GM12878 (cell line): ENCODE measurements at regions of chr1 and their contacts with region 1.

Region 1: DNA sequence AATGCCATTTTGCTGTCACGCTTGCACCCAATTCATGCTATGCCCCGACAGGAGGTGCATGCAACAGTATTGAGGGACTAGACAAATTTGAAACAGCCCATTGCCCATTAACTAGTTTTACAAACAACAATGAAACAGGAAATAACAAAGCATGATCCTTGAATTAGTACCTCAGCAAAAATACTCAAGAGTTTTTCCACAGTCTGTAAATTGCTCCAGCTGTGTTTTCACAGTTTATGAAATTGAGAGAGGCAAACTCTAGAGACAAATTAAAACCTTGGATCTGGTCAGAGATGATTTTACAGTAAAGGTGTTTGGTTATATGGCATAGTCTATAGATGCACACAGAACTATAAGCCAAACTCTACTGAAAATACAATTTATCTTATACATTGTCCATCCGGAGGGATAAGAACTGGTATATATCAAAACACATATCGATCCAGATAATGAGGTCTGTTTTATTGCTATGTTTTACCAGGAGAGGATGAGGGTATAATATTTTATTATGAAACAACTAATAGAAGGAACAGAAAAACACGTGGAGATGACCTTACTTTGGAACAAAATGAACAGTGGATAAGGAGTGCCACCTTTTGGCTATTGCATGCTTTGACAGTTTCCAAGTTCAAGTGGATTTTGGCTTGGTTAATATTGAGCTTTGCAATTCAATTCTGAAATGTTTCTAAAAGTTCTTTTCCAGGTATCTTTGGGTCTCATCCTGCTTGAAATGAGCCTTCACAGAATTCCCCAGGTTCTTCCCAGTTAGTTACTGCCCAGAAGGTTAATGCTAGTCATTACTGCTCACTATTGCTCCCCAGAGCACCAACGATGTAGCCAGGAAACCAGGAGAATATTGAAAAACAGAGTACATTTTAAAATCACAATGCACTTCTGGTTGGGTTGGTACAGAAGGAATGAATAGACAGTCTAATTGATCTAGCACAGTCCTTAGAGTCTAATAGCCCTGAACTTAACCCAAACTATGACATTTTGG is 45.7 kb downstream of the ZC3H11B start:
- DNase-seq: peak; percentile 13
- ATAC-seq: peak; percentile 70
- H3K4me3 ChIP-seq: no peak overlapping the region
- H3K27ac ChIP-seq: no peak overlapping the region
- H3K4me1 ChIP-seq: no peaks in the 10 kb centered on the region; the same call in 1 of the 2 replicates
- H3K27me3 ChIP-seq: no peaks in the 10 kb centered on the region; a peak in 1 of 4 replicates
- CTCF ChIP-seq: peak; percentile 48 to 74 (median 53)
- EP300 ChIP-seq: no peak
- POLR2A ChIP-seq: no peak
- RAD21 ChIP-seq: peak; percentile 86

Region 2: DNA sequence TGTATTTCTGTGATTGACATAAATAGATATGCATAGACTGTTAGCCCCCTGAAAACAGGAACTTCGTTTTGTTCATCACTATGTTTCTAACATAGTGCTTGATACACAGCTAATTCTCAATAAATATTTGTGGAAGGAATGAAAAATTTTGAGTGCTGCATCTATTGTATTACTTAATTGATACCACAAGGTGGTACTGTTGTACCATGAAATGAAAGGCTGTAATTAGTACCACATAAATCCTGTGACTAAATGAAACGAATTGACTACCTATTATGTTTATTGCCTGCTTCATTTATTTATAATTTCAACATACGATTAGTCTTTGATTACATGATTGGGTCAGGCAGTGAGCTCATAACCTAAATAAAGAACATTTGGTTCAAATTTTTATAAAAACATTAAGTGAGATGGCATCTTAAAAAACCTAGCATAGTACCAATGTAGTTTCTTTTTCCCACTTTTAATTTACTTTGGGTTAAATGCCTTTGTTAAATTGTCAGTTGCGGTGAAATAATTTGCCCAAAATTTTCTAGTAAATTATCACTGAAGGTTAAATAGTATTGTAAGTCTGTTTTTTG is 1237.1 kb before region 1 on chr1:
- CTCF ChIA-PET with region 1: no interaction called
- POLR2A ChIA-PET with region 1: no interaction called
- RAD21 ChIA-PET with region 1: no interaction called
- SMC1A ChIA-PET with region 1: interaction called, 3 read pairs
- in situ Hi-C with region 1: no loop called
- intact Hi-C with region 1: loop called (anchors 5 kb)
- DNase-seq: no peak
- ATAC-seq: peak; percentile 76
- H3K4me3 ChIP-seq: no peak overlapping the region
- H3K27ac ChIP-seq: no peak overlapping the region
- H3K4me1 ChIP-seq: no peaks in the 10 kb centered on the region
- H3K27me3 ChIP-seq: no peaks in the 10 kb centered on the region
- CTCF ChIP-seq: peak; percentile 36 to 69 (median 39); a peak in 5 of 6 replicates
- EP300 ChIP-seq: no peak
- POLR2A ChIP-seq: no peak
- RAD21 ChIP-seq: peak; percentile 71

Region 3: DNA sequence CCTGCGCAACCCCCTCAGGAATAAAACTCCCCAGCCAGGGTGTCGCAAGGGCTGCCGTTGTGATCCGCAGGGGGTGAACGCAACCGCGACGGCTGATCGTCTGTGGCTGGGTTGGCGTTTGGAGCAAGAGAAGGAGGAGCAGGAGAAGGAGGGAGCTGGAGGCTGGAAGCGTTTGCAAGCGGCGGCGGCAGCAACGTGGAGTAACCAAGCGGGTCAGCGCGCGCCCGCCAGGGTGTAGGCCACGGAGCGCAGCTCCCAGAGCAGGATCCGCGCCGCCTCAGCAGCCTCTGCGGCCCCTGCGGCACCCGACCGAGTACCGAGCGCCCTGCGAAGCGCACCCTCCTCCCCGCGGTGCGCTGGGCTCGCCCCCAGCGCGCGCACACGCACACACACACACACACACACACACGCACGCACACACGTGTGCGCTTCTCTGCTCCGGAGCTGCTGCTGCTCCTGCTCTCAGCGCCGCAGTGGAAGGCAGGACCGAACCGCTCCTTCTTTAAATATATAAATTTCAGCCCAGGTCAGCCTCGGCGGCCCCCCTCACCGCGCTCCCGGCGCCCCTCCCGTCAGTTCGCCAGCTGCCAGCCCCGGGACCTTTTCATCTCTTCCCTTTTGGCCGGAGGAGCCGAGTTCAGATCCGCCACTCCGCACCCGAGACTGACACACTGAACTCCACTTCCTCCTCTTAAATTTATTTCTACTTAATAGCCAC is 1221.4 kb before region 1 on chr1:
- CTCF ChIA-PET with region 1: no interaction called
- POLR2A ChIA-PET with region 1: no interaction called
- RAD21 ChIA-PET with region 1: no interaction called
- SMC1A ChIA-PET with region 1: no interaction called
- in situ Hi-C with region 1: loop called (anchors 10 kb)
- intact Hi-C with region 1: loop called (anchors 5 kb)
- DNase-seq: no peak
- ATAC-seq: peak; percentile 90
- H3K4me3 ChIP-seq: peak overlapping the region; percentile 67
- H3K27ac ChIP-seq: no peak overlapping the region
- H3K4me1 ChIP-seq: peaks cover 4% of the 10 kb centered on the region
- H3K27me3 ChIP-seq: peaks cover 3 to 21% of the 10 kb centered on the region in 2 experiments
- CTCF ChIP-seq: no peak
- EP300 ChIP-seq: no peak
- POLR2A ChIP-seq: no peak
- RAD21 ChIP-seq: no peak

Region 4: GRCh38 chr1:219209578-219209977 is 357.7 kb before region 1 on chr1:
- CTCF ChIA-PET with region 1: no interaction called
- POLR2A ChIA-PET with region 1: no interaction called
- RAD21 ChIA-PET with region 1: no interaction called
- SMC1A ChIA-PET with region 1: no interaction called
- in situ Hi-C with region 1: no loop called
- intact Hi-C with region 1: loop called (anchors 2 kb)
- DNase-seq: no peak
- ATAC-seq: no peak
- H3K4me3 ChIP-seq: no peak overlapping the region
- H3K27ac ChIP-seq: no peak overlapping the region
- H3K4me1 ChIP-seq: no peaks in the 10 kb centered on the region
- H3K27me3 ChIP-seq: no peaks in the 10 kb centered on the region
- CTCF ChIP-seq: no peak
- EP300 ChIP-seq: no peak
- POLR2A ChIP-seq: no peak
- RAD21 ChIP-seq: no peak

Region 5: DNA sequence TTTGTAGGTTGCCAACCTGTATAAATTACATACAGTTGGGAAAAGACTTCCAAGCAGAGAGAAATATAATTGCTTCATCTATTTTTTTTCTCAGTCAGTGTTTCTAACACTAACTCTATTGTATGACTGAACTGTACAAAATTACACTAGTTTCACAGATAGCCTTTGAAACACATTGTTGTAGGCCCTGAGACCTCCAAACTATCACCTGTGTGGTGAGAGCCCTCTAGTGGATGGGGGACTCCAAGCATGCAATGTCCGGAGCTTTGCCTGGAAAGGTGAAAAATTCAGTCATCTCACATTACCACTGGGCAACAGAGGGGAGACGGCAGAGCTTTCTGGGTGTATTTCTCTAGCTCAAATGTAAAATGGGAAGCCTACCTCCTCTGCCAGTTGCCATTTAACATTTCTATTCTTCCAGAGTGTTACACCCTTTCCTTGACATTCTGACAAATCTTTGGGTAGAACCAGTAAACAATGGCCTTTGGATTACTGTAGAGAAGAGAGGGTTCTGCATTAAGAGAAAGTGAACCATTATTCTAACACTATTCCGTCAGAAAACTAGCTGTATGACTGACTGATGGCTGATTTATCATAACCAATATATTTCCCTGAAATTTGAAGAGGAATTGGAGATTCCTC is 181.3 kb before region 1 on chr1:
- CTCF ChIA-PET with region 1: no interaction called
- POLR2A ChIA-PET with region 1: no interaction called
- RAD21 ChIA-PET with region 1: no interaction called
- SMC1A ChIA-PET with region 1: no interaction called
- in situ Hi-C with region 1: no loop called
- intact Hi-C with region 1: loop called (anchors 1 kb)
- DNase-seq: peak; percentile 5
- ATAC-seq: peak; percentile 99
- H3K4me3 ChIP-seq: no peak overlapping the region
- H3K27ac ChIP-seq: no peak overlapping the region
- H3K4me1 ChIP-seq: no peaks in the 10 kb centered on the region
- H3K27me3 ChIP-seq: no peaks in the 10 kb centered on the region
- CTCF ChIP-seq: peak; percentile 78 to 91 (median 90)
- EP300 ChIP-seq: no peak
- POLR2A ChIP-seq: no peak
- RAD21 ChIP-seq: peak; percentile 96

Region 6: DNA sequence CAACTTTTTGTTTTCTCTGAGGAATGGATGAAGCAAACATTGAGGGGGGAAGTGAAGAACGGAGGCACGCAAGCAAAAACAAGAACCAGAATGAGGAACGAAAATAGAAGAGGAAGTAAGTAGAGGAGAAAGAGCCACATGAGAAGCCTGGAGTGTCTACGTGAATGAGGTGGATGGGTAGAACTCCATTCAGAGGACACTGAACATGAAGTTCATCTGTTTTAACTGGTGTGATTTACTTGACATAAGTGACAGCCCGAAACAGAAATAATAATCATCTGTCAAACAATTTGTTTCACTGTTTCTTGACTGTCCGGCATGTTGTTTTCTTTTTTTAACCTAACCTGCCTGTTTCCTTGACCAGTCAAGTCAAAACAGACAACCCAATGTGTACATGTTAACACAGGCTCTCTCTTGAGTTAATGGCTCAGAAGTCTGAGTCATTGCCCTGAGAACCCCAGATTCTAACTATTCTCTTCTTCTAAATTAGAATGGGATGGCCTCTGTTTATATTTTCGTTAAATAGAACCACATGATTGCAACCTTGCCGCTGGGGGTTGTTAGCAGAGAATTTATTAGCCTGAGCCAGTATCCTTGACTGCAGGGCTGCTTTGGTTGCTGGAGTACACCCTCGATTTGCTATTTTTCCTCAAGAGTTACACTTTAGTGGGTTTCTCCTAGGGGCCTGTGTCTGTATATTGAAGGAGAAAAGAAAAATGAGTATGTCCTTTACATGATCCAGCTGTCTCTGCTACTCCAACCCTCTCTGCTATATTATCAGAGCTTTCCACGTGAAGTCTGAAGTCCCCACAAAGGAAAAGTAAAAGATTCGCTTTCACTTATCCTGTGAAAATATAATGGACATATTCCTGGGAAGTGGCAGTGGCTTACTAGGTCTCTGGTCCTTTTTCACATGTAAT is 106.1 kb before region 1 on chr1:
- CTCF ChIA-PET with region 1: no interaction called
- POLR2A ChIA-PET with region 1: no interaction called
- RAD21 ChIA-PET with region 1: no interaction called
- SMC1A ChIA-PET with region 1: no interaction called
- in situ Hi-C with region 1: no loop called
- intact Hi-C with region 1: loop called (anchors 10 kb)
- DNase-seq: peak; percentile 79
- ATAC-seq: peak; percentile 86
- H3K4me3 ChIP-seq: peak overlapping the region; percentile 28; the same call in 1 of the 2 replicates
- H3K27ac ChIP-seq: peak overlapping the region; percentile 90
- H3K4me1 ChIP-seq: peaks cover 46% of the 10 kb centered on the region
- H3K27me3 ChIP-seq: no peaks in the 10 kb centered on the region
- CTCF ChIP-seq: no peak
- EP300 ChIP-seq: peak in 1 of 2 experiments; percentile 76; a peak in 1 of 4 replicates
- POLR2A ChIP-seq: no peak
- RAD21 ChIP-seq: peak; percentile 33

Region 7: DNA sequence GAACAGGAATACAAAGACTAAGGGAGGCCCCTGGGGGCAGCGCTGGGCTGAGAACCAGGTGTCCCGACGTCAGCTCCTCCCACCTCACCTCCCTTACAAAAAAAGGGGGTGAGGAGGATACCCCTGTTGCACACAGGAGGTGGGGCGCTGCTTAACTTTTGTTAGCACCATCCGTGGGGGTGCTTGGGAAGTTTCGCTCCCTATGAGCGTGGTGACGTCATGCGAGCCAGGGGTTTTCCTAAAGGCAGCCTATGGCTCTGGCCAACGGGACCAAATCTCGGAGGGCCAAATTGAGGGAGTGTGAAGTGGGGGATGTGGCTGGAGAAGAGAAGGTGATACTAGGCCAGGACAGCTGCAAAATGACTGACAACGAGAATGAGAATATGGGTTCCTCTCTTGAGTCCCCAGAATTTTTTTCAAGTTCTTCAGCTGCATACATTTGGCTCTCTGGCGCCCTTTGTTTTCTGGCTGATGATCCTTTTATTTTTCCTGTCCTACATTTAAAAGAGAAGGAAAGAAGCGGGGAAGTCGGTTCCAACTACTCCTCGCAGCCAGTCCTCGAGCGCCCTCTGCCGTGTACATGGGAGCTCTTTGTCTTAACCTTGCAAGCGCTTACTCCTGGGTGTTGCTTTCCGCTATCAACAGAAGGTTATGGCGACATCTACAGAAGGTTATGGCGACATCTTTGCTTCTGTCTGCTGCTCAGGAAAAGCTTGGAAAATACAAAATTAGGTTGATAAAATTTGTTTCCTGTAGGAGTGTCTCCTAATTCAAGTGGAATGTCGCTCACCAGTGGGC is 93.6 kb after region 1 on chr1:
- CTCF ChIA-PET with region 1: interaction called, 4 read pairs
- POLR2A ChIA-PET with region 1: no interaction called
- RAD21 ChIA-PET with region 1: no interaction called
- SMC1A ChIA-PET with region 1: no interaction called
- in situ Hi-C with region 1: no loop called
- intact Hi-C with region 1: loop called (anchors 1 kb)
- DNase-seq: peak; percentile 27
- ATAC-seq: peak; percentile 92
- H3K4me3 ChIP-seq: 0 out of 2 replicates have a peak overlapping the region, but pooled peaks have one; percentile 12
- H3K27ac ChIP-seq: no peak overlapping the region
- H3K4me1 ChIP-seq: peaks cover 16% of the 10 kb centered on the region
- H3K27me3 ChIP-seq: no peaks in the 10 kb centered on the region
- CTCF ChIP-seq: peak; percentile 84 to 88 (median 88)
- EP300 ChIP-seq: no peak
- POLR2A ChIP-seq: no peak
- RAD21 ChIP-seq: peak; percentile 89